GM23248 (cell line): ENCODE measurements at regions of chr12 and their contacts with region 1.

Region 1: GRCh38 chr12:57822392-57823130 is 4.0 kb upstream of the AVIL start:
- DNase-seq: no peak
- H3K4me3 ChIP-seq: no peak overlapping the region
- H3K27ac ChIP-seq: no peak overlapping the region
- H3K4me1 ChIP-seq: peaks cover 7% of the 10 kb centered on the region; the same call in 1 of the 2 replicates
- H3K27me3 ChIP-seq: no peaks in the 10 kb centered on the region

Region 2: DNA sequence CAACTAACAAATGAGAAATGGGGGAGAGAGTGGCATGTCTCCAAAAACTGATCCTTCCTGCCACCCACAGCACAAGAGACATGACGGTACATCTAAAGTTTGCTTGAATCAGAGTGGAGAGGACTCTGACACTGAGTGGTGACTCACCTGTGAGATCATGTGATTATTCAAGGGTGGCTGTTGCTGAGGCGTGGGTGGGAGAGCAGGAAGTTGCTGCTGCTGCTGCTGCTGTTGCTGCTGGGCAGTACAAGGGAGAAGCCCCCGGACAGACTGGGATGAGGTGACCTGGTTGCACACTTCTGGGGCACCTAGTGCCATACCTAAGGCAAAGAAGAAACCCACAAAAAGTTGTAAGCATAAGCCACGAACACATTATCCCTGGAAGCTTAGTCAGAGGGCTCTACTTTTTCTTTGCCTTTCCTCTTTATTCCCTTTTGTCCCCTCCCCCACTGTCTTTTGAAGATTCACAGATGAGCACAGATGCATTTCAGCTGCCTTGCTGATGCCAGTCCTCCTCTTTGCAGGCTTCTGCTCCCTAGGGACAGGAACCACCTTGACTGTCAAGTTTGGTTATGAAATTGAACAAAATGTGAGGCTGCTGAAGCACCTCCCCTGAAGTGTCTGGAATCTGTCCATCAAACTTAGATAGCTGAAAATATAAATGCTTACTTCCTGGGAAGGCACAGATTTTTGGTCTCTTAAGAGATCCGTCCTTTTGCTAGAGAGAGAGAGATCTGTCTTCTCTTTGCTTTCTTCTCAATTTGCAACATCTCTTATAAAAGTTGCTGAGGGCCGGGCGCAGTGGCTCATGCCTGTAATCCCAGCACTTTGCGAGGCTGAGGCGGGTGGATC is 542.1 kb before region 1 on chr12:
- in situ Hi-C with region 1: no loop called
- DNase-seq: peak; percentile 96
- H3K4me3 ChIP-seq: peak overlapping the region; percentile 51
- H3K27ac ChIP-seq: peak overlapping the region; percentile 83
- H3K4me1 ChIP-seq: peaks cover 17% of the 10 kb centered on the region
- H3K27me3 ChIP-seq: no peaks in the 10 kb centered on the region

Region 3: DNA sequence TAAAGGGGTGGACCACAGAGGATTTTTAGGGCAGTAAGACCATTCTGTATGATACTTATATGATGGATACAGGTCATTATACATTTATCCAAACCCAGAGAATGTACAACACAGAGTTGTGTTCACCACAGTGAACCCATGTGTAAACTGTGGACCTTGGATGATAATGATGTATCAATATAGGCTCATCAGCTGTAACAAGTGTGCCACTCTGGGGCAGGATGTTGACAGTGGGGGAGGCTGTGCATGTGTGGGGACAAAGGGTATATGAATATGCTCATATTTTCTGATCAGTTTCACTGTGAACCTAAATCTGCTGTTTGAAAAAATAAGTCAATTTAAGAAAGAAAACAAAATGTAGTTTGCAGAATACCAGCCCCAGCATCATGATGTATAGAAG is 142.9 kb before region 1 on chr12:
- in situ Hi-C with region 1: no loop called
- DNase-seq: no peak
- H3K4me3 ChIP-seq: no peak overlapping the region
- H3K27ac ChIP-seq: no peak overlapping the region
- H3K4me1 ChIP-seq: no peaks in the 10 kb centered on the region
- H3K27me3 ChIP-seq: peaks cover 14% of the 10 kb centered on the region

Region 4: GRCh38 chr12:57726151-57726883 is 96.2 kb before region 1 on chr12:
- in situ Hi-C with region 1: no loop called
- DNase-seq: peak; percentile 95
- H3K4me3 ChIP-seq: peak overlapping the region; percentile 83
- H3K27ac ChIP-seq: peak overlapping the region; percentile 70
- H3K4me1 ChIP-seq: no peaks in the 10 kb centered on the region
- H3K27me3 ChIP-seq: no peaks in the 10 kb centered on the region

Region 5: DNA sequence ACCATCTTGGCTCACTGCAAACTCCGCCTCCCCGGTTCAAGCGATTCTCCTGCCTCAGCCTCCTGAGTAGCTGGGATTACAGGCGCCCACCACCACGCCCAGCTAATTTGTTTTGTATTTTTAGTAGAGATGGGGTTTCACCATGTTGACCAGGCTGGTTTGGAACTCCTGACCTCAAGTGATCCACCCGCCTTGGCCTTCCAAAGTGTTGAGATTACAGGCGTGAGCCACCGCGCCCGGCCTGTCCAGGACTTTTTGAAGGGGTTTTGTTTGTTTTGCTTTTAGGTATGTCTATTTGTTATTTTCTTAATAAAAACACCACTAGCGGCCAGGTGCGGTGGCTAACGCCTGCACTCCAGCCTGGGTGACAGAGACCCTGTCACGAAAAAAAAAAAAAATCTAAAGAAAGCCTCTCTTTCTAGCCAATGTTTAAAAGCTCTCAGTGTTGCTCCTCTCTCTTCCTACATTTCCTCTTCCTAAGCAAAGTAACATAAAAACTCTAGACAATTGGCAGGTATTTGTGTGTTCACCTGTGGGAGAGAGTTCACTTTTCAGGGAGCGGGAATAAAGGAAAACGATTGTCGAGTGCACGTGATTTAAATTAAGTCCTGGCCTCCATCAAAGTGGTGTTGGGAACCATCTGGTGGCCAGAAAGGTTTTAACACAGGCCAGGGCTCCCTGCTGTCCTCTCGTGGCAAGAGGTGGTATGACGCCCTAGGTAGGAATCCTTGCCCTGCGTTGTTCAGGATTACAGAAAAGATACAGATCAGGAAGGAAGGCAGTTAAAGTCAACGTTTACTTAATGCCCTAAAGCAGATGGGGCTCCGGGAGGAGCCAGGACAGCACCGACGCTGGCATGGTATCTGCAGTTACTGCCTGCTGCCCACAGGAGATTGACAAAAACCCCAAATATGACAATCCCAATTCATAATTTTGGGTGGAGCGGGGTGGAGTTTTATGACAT is 82.6 kb after region 1 on chr12:
- in situ Hi-C with region 1: loop called (anchors 5 kb)
- DNase-seq: peak; percentile 92
- H3K4me3 ChIP-seq: peak overlapping the region; percentile 21; the same call in 1 of the 2 replicates
- H3K27ac ChIP-seq: no peak overlapping the region
- H3K4me1 ChIP-seq: no peaks in the 10 kb centered on the region
- H3K27me3 ChIP-seq: no peaks in the 10 kb centered on the region